CD4-positive, alpha-beta T cell (primary cell): ENCODE measurements at regions of chr1 and their contacts with region 1.

Region 1: GRCh38 chr1:6423321-6423999 is 1.1 kb upstream of the ESPN start:
- DNase-seq: peak; percentile 60 to 85 (median 72)
- ATAC-seq: peak; percentile 85
- H3K4me3 ChIP-seq: peak overlapping the region; percentile 33
- H3K4me3 Mint-ChIP-seq: peak overlapping the region; percentile 67
- H3K27ac ChIP-seq: no peak overlapping the region
- H3K27ac Mint-ChIP-seq: no peak overlapping the region
- H3K4me1 ChIP-seq: peaks cover 48% of the 10 kb centered on the region
- H3K4me1 Mint-ChIP-seq: peaks cover 13% of the 10 kb centered on the region
- H3K27me3 ChIP-seq: peaks cover 53 to 69% of the 10 kb centered on the region in 2 experiments
- H3K27me3 Mint-ChIP-seq: peaks cover 55% of the 10 kb centered on the region
- CTCF ChIP-seq: peak; percentile 85

Region 2: GRCh38 chr1:6438047-6438525 is 14.6 kb after region 1 on chr1:
- CTCF ChIA-PET with region 1: interaction called, 77 read pairs
- POLR2A ChIA-PET with region 1: interaction called, 6 read pairs
- intact Hi-C with region 1: no loop called
- DNase-seq: peak; percentile 56 to 85 (median 66)
- ATAC-seq: peak; percentile 65
- H3K4me3 ChIP-seq: no peak overlapping the region
- H3K4me3 Mint-ChIP-seq: peak overlapping the region; percentile 65
- H3K27ac ChIP-seq: no peak overlapping the region
- H3K27ac Mint-ChIP-seq: no peak overlapping the region
- H3K4me1 ChIP-seq: peaks cover 15% of the 10 kb centered on the region
- H3K4me1 Mint-ChIP-seq: peaks cover 9% of the 10 kb centered on the region
- H3K27me3 ChIP-seq: peaks cover 10 to 11% of the 10 kb centered on the region in 2 experiments
- H3K27me3 Mint-ChIP-seq: peaks cover 28% of the 10 kb centered on the region
- CTCF ChIP-seq: peak; percentile 97

Region 3: GRCh38 chr1:6489799-6490180 is 66.3 kb after region 1 on chr1:
- CTCF ChIA-PET with region 1: interaction called, 7 read pairs
- POLR2A ChIA-PET with region 1: interaction called, 3 read pairs
- intact Hi-C with region 1: loop called in 1 of 2 experiments (anchors 1 kb)
- DNase-seq: peak; percentile 59 to 90 (median 72)
- ATAC-seq: peak; percentile 58
- H3K4me3 ChIP-seq: peak overlapping the region; percentile 90
- H3K4me3 Mint-ChIP-seq: peak overlapping the region; percentile 82
- H3K27ac ChIP-seq: no peak overlapping the region
- H3K27ac Mint-ChIP-seq: no peak overlapping the region
- H3K4me1 ChIP-seq: peaks cover 58% of the 10 kb centered on the region
- H3K4me1 Mint-ChIP-seq: peaks cover 30% of the 10 kb centered on the region
- H3K27me3 ChIP-seq: peaks cover 12 to 14% of the 10 kb centered on the region in 2 experiments
- H3K27me3 Mint-ChIP-seq: peaks cover 21% of the 10 kb centered on the region
- CTCF ChIP-seq: peak; percentile 96

Region 4: GRCh38 chr1:6646499-6647148 is 223.2 kb after region 1 on chr1:
- CTCF ChIA-PET with region 1: interaction called, 9 read pairs
- POLR2A ChIA-PET with region 1: no interaction called
- intact Hi-C with region 1: loop called in 1 of 2 experiments (anchors 10 kb)
- DNase-seq: peak in 10 of 14 experiments; percentile 7 to 70 (median 19)
- ATAC-seq: peak; percentile 71
- H3K4me3 ChIP-seq: no peak overlapping the region
- H3K4me3 Mint-ChIP-seq: no peak overlapping the region
- H3K27ac ChIP-seq: no peak overlapping the region
- H3K27ac Mint-ChIP-seq: no peak overlapping the region
- H3K4me1 ChIP-seq: peaks cover 6% of the 10 kb centered on the region
- H3K4me1 Mint-ChIP-seq: peaks cover 6% of the 10 kb centered on the region
- H3K27me3 ChIP-seq: no peaks in the 10 kb centered on the region
- H3K27me3 Mint-ChIP-seq: no peaks in the 10 kb centered on the region
- CTCF ChIP-seq: peak; percentile 70